ENCODE measurements at regions of chr5 and their contacts with region 1.

Region 1: GRCh38 chr5:149345147-149345875 is at the start of gene GRPEL2:
- DNase-seq: peak; percentile 88
- H3K4me3 Mint-ChIP-seq: peak within 1 kb of the TSS; percentile 98
- H3K27ac Mint-ChIP-seq: peak within 1 kb of the TSS; percentile 94
- H3K4me1 Mint-ChIP-seq: peaks cover 42% of the 10 kb centered on the region
- H3K27me3 Mint-ChIP-seq: peaks cover 1% of the 10 kb centered on the region
- total RNA-seq, gene GRPEL2: 22.5 TPM in 2 replicates

Region 2: DNA sequence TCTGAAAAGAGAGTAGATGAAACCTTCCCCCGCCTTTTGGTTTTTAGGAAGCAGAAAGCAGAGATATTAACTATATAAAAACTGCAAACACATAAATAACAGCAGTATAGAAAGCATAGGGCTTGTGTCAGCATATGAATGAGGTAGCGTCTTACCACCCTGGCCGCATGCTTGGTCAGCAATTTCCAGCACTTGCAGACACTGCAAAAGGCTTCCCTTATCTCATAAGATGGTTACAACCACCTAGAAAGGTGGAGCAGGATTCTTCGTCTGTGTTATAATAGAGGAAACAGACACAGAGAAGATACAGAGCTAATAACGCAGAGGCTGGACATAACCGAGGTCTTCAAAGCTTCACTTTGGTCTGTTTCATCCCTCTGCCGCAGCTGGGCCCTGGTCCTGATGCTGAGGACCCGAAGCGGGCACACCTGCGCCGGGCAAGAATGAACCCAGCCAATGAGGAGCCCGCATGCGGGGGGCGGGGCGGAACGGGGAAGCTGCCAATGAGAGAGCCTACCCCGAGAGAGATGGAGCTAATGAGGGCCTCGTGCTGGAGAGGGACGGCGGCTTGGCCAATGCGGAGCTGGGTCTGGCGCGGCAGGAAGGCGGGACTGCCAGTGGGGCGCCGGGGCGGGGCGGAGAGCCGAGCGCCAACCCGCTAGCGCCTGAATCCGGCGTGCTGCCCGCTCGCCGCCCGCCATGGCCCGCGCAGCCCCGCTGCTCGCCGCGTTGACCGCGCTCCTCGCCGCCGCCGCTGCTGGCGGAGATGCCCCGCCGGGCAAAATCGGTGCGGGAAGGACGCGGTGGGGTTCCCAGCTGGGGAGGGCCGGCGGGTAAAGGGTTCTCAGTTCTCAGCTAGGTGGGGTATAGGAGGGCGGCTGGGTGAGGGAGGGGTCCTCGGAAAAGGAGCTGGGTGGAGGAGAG is 12.3 kb after region 1 on chr5 and contains the start of gene PCYOX1L:
- intact Hi-C with region 1: loop called (anchors 1 kb)
- DNase-seq: peak; percentile 97
- H3K4me3 Mint-ChIP-seq: peak within 1 kb of the TSS; percentile 94
- H3K27ac Mint-ChIP-seq: peak within 1 kb of the TSS; percentile 81
- H3K4me1 Mint-ChIP-seq: peaks cover 63% of the 10 kb centered on the region
- H3K27me3 Mint-ChIP-seq: no peaks in the 10 kb centered on the region
- total RNA-seq, gene PCYOX1L: 16.6 and 17.8 TPM in 2 replicates

Measured in activated T-helper 2 cell treated with anti-CD3 and anti-CD28 coated beads, Interferon-gamma antibody, Interleukin-2, Interleukin-4, amounts not matched to agents 10 μg/mL and 5 μg/mL and 100 μg/mL, durations not matched to agents 14 hours and 24 hours and 36 hours (primary cell).